Caco-2 (cell line): ENCODE measurements at regions of chr19 and their contacts with region 1.

Region 1: DNA sequence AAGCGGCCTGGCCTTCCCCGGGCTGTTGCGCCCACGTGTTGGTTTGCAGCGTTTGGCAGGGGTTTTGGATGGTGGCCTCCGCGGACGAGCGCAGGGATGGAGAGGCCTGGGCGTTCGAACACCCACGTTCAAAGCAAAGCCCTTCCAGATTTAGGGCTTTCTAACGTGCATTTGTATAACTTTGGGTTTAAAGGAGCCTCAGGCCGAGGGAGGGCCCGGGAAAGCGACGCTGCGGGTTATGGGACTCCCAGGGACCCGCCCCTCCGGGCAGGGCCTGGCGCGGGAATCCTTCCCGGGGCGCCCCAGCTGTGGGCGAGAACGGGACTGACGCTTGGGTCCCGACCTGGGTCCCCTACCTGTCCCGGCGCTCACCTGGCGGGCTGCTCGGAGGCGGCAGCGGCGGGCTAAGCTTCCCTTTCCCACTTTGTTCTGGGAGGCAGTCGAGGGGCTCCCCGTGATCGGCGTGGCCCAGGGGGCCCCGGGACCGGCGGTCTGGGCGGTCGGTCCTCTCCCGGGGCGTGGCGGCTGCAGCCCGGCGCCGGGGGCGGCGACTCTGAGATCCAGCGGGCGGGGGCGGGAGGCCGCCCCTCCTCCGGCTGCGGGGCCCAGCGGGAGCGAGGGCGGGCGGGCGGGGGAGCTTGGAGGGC is at the start of gene FBXO17:
- DNase-seq: peak; percentile 75 to 87
- H3K4me3 ChIP-seq: peak within 1 kb of the TSS; percentile 63
- H3K4me3 Mint-ChIP-seq: peak within 1 kb of the TSS; percentile 100
- H3K27ac Mint-ChIP-seq: peak within 1 kb of the TSS; percentile 92
- H3K4me1 ChIP-seq: peaks cover 15% of the 10 kb centered on the region
- H3K4me1 Mint-ChIP-seq: no peaks in the 10 kb centered on the region
- H3K27me3 ChIP-seq: no peaks in the 10 kb centered on the region
- H3K27me3 Mint-ChIP-seq: no peaks in the 10 kb centered on the region
- CTCF ChIP-seq: no peak
- total RNA-seq, gene FBXO17: 42.8 and 45.2 TPM in 2 replicates

Region 2: GRCh38 chr19:38952395-38953165 is 22.8 kb before region 1 on chr19:
- CTCF ChIA-PET with region 1: interaction called, 10 read pairs
- POLR2A ChIA-PET with region 1: no interaction called
- intact Hi-C with region 1: no loop called
- DNase-seq: peak; percentile 58 to 65
- H3K4me3 ChIP-seq: no peak overlapping the region
- H3K4me3 Mint-ChIP-seq: peak overlapping the region; percentile 13
- H3K27ac Mint-ChIP-seq: peak overlapping the region; percentile 45
- H3K4me1 ChIP-seq: peaks cover 18% of the 10 kb centered on the region
- H3K4me1 Mint-ChIP-seq: peaks cover 19% of the 10 kb centered on the region
- H3K27me3 ChIP-seq: no peaks in the 10 kb centered on the region
- H3K27me3 Mint-ChIP-seq: no peaks in the 10 kb centered on the region
- CTCF ChIP-seq: peak; percentile 26 to 39

Region 3: GRCh38 chr19:38964738-38965137 is 10.6 kb before region 1 on chr19:
- CTCF ChIA-PET with region 1: interaction called, 15 read pairs
- POLR2A ChIA-PET with region 1: interaction called, 5 read pairs
- intact Hi-C with region 1: loop called (anchors 1 kb)
- DNase-seq: no peak
- H3K4me3 ChIP-seq: no peak overlapping the region
- H3K4me3 Mint-ChIP-seq: no peak overlapping the region
- H3K27ac Mint-ChIP-seq: no peak overlapping the region
- H3K4me1 ChIP-seq: no peaks in the 10 kb centered on the region; the same call in 1 of the 2 replicates
- H3K4me1 Mint-ChIP-seq: peaks cover 11% of the 10 kb centered on the region
- H3K27me3 ChIP-seq: no peaks in the 10 kb centered on the region
- H3K27me3 Mint-ChIP-seq: no peaks in the 10 kb centered on the region
- CTCF ChIP-seq: no peak

Region 4: GRCh38 chr19:39014037-39014436 is 38.7 kb after region 1 on chr19:
- CTCF ChIA-PET with region 1: interaction called, 12 read pairs
- POLR2A ChIA-PET with region 1: no interaction called
- intact Hi-C with region 1: no loop called
- DNase-seq: no peak
- H3K4me3 ChIP-seq: no peak overlapping the region
- H3K4me3 Mint-ChIP-seq: no peak overlapping the region
- H3K27ac Mint-ChIP-seq: no peak overlapping the region
- H3K4me1 ChIP-seq: no peaks in the 10 kb centered on the region
- H3K4me1 Mint-ChIP-seq: no peaks in the 10 kb centered on the region
- H3K27me3 ChIP-seq: no peaks in the 10 kb centered on the region; the same call in 1 of the 2 replicates
- H3K27me3 Mint-ChIP-seq: peaks cover 10% of the 10 kb centered on the region
- CTCF ChIP-seq: no peak

Region 5: DNA sequence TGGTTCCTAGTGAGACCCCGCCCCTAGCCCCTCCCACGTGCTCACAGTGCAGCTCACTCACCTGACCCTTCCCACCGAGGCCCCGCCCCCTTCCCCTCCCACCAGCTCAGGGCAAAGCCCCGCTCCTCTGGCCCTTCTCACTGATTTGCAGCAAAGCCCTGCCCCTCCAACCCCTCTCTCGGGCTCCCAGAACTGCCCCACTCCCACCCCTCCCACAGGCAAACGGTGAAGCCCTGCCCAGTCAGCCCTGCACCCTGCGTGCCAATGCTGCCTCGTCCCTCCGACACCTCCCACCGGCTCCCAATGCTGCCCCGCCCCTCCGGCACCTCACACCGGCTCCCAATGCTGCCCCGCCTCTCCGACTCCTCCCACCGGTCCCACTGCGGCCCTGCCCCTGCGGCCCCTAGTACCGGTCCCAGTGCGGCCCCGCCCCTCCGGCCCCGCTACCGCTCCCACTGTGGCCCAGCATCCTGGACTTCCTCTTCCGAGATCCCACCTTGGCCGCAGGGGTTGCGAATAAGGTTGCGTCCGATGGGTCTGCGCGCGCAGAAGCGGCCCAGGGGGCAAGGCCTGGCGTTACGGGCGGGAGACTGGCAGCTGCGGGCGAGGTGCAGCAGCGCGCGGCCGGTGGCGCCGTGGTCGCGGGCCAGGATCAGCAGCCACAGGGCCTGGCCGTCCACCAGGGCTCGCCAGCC is 56.2 kb after region 1 on chr19:
- CTCF ChIA-PET with region 1: interaction called, 5 read pairs
- POLR2A ChIA-PET with region 1: interaction called, 12 read pairs
- intact Hi-C with region 1: loop called (anchors 1 kb)
- DNase-seq: peak; percentile 98 to 99
- H3K4me3 ChIP-seq: peak overlapping the region; percentile 76
- H3K4me3 Mint-ChIP-seq: peak overlapping the region; percentile 83
- H3K27ac Mint-ChIP-seq: peak overlapping the region; percentile 85
- H3K4me1 ChIP-seq: peaks cover 19% of the 10 kb centered on the region
- H3K4me1 Mint-ChIP-seq: peaks cover under 1% of the 10 kb centered on the region
- H3K27me3 ChIP-seq: no peaks in the 10 kb centered on the region
- H3K27me3 Mint-ChIP-seq: no peaks in the 10 kb centered on the region
- CTCF ChIP-seq: no peak

Region 6: DNA sequence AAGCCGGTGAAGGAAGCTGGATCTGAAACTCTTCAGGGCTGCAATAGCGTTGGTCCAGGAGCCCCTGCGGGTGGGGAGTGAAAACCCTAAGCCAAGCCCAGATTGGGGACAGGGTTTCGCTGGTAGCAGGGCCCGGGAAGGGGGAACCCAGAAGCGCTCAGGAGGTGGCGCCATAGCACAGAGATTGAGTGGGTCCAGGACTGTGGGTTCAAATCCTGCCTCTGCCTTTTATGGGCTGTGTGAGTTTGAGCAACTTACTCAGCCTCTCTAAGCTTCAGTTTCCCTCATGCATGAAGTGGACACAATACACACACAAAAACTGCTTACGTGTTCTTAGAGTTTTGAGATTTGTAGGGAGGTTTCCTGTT is 237.0 kb after region 1 on chr19:
- CTCF ChIA-PET with region 1: no interaction called
- POLR2A ChIA-PET with region 1: interaction called, 14 read pairs
- intact Hi-C with region 1: no loop called
- DNase-seq: peak; percentile 48 to 67
- H3K4me3 ChIP-seq: no peak overlapping the region
- H3K4me3 Mint-ChIP-seq: no peak overlapping the region
- H3K27ac Mint-ChIP-seq: no peak overlapping the region
- H3K4me1 ChIP-seq: no peaks in the 10 kb centered on the region; the same call in 1 of the 2 replicates
- H3K4me1 Mint-ChIP-seq: no peaks in the 10 kb centered on the region
- H3K27me3 ChIP-seq: no peaks in the 10 kb centered on the region
- H3K27me3 Mint-ChIP-seq: no peaks in the 10 kb centered on the region
- CTCF ChIP-seq: peak; percentile 39 to 46